ENCODE measurements at regions of chr20 and their contacts with region 1.

Region 1: GRCh38 chr20:32779500-32780211 is 17.5 kb downstream of the DNMT3B start:
- DNase-seq: no peak
- H3K4me3 Mint-ChIP-seq: no peak overlapping the region
- H3K27ac Mint-ChIP-seq: no peak overlapping the region
- H3K4me1 Mint-ChIP-seq: peaks cover 5% of the 10 kb centered on the region
- H3K27me3 Mint-ChIP-seq: no peaks in the 10 kb centered on the region

Region 2: DNA sequence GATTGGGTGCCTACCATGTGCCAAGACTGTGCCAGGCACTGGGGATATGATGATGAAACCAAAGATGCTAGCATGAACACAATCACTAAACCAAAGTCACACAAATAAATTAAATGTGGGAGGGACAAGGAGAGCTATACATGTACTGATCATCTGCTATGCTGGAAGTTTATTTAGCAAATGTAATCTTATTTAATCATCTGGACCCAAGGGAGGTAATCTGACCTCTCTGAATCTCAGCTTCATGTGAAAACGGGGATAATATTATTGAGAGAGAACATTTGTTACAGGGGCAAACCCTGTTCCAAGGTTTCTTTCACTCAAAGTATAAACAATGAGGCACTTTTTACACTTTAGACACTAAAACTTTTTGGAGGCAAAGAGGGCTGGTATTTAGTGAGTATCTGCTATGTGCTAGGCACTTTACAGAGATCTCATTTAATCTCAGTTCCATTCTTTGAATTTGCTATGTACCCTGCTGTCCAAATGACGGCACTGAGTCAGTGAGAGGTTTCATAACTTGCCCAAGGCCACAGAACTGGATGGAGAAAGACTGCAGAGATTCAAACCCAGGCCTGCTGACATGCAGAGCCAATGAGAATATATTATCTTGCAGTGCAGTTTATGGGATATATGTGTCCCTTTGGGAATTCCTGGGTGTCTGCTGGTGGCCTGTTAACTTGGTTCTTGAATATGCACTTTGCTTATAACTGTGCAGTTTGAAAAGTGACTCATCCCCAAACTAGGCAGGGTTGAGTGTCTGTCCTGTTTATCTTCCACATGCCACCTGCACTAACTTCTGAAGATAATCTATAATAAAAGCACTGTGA is 424.9 kb before region 1 on chr20:
- CTCF ChIA-PET with region 1: no interaction called
- DNase-seq: no peak
- H3K4me3 Mint-ChIP-seq: no peak overlapping the region
- H3K27ac Mint-ChIP-seq: peak overlapping the region; percentile 80
- H3K4me1 Mint-ChIP-seq: peaks cover 38% of the 10 kb centered on the region
- H3K27me3 Mint-ChIP-seq: no peaks in the 10 kb centered on the region

Region 3: DNA sequence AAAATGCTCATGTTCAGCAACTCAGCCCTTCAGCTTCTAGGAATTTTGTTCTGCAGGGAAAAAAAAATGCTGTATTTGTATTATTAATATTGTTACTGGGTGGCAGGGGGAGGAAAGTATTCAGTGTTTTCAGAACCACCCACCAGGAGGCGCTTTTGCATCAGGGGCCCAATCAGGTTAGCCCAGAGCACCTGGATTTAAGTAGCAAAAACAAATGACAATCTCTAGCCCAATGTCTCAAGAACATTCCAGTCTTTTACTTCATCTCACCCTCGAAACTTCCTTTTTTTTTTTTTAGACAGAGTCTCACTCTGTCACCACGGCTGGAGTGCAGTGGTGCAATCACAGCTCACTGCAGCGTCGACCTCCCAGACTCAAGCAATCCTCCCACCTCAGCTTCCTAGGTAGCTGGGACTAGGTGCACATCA is 105.3 kb before region 1 on chr20:
- CTCF ChIA-PET with region 1: interaction called, 363 read pairs
- DNase-seq: peak; percentile 84
- H3K4me3 Mint-ChIP-seq: no peak overlapping the region
- H3K27ac Mint-ChIP-seq: no peak overlapping the region
- H3K4me1 Mint-ChIP-seq: peaks cover 31% of the 10 kb centered on the region
- H3K27me3 Mint-ChIP-seq: peaks cover 11% of the 10 kb centered on the region

Region 4: DNA sequence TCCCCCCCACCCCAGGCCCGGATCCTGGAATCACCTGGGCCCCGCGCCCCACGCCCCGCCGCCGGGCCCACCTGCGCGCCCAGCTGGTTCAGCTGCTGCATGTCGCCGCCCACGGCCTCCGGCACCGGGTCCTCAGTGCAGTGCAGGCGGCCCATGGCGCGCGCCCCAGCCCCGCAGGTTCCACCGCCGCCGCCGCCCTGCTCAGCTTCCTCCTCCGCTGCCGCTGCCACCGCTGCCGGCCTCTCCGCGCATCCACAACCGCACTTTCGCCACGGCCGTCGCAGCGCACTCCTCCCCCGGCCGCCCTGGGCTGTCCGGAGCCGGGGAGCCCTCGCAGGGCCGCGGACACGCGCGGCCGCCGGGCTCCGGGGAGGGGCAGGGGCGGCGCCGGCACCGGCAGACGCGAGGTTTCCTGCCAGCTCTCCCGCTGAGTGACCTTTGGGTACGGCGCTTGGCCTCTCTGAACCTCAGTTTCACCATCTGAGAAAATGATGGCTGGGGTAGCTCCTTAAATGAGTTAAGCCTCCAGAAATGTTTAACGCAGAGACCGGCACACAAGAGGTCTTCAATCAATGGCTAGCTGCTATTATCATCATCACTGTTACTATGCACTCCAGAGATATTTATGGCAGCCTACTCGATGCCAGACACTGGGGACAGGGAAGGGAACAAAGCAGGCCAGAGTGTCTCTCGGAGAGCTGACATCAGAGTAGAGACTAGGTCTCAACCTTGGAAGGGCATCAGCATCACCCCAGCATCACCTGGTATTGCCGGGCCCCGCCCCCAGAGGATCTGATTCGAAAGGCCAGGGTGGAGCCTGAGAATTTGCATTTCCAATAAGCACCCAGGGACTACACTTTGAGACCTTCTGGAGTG is 36.2 kb before region 1 on chr20 and contains the start of gene COMMD7:
- CTCF ChIA-PET with region 1: interaction called, 30 read pairs
- DNase-seq: peak; percentile 82
- H3K4me3 Mint-ChIP-seq: peak within 1 kb of the TSS; percentile 98
- H3K27ac Mint-ChIP-seq: peak within 1 kb of the TSS; percentile 96
- H3K4me1 Mint-ChIP-seq: peaks cover 43% of the 10 kb centered on the region
- H3K27me3 Mint-ChIP-seq: no peaks in the 10 kb centered on the region

Region 5: GRCh38 chr20:32767418-32768198 is 12.0 kb before region 1 on chr20:
- CTCF ChIA-PET with region 1: interaction called, 35 read pairs
- DNase-seq: no peak
- H3K4me3 Mint-ChIP-seq: no peak overlapping the region
- H3K27ac Mint-ChIP-seq: no peak overlapping the region
- H3K4me1 Mint-ChIP-seq: peaks cover 31% of the 10 kb centered on the region
- H3K27me3 Mint-ChIP-seq: peaks cover 19% of the 10 kb centered on the region

Region 6: DNA sequence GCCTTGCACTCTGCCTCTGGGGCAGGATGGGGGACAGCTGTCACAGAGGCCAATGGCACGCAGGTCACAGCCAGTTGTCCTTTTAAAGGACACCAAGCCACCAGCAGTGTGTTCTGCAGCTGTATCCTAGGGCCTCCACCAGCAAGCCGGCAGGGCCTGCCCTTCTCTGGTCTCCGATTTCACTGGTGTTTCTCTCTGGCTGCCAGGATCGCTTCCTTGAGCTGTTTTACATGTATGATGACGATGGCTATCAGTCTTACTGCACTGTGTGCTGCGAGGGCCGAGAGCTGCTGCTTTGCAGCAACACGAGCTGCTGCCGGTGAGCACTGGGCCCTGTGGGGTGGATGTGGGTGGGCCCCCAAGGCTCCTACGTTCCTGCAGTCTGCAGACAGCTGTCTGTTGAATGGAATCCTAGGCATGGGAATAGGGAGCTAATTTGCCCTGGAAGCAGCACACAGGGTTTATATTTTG is 17.4 kb after region 1 on chr20:
- CTCF ChIA-PET with region 1: interaction called, 12 read pairs
- DNase-seq: no peak
- H3K4me3 Mint-ChIP-seq: no peak overlapping the region
- H3K27ac Mint-ChIP-seq: peak overlapping the region; percentile 60
- H3K4me1 Mint-ChIP-seq: peaks cover 32% of the 10 kb centered on the region
- H3K27me3 Mint-ChIP-seq: no peaks in the 10 kb centered on the region

Region 7: DNA sequence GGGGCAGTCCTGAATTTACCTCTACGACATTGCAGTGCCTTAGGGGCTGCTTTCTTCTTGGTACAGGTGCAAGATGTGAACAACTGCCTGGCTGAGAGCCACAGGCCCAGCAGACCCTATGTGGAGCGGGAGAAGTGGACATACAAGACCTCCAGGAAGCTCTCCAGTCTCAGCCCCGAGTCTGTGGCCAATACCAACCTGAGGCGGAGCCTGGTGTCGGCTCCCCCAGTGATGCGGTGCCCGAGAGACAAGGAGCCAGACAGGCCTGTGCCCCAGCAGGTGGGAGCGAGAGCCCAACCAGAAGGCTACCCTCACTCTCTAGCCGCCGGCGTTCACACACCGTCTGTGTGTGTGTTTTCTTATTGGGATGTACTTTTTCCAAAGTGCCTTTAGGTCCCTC is 138.6 kb after region 1 on chr20:
- CTCF ChIA-PET with region 1: no interaction called
- DNase-seq: no peak
- H3K4me3 Mint-ChIP-seq: no peak overlapping the region
- H3K27ac Mint-ChIP-seq: no peak overlapping the region
- H3K4me1 Mint-ChIP-seq: no peaks in the 10 kb centered on the region
- H3K27me3 Mint-ChIP-seq: no peaks in the 10 kb centered on the region

Region 8: GRCh38 chr20:33273117-33273851 is 493.6 kb after region 1 on chr20:
- CTCF ChIA-PET with region 1: no interaction called
- DNase-seq: no peak
- H3K4me3 Mint-ChIP-seq: no peak overlapping the region
- H3K27ac Mint-ChIP-seq: no peak overlapping the region
- H3K4me1 Mint-ChIP-seq: no peaks in the 10 kb centered on the region
- H3K27me3 Mint-ChIP-seq: peaks cover 28% of the 10 kb centered on the region

Measured in activated naive CD4-positive, alpha-beta T cell treated with anti-CD3 and anti-CD28 coated beads, Interleukin-2, amount 10 ng/mL, durations not matched to agents 7 days and 5 days (primary cell).